Activated T-helper 2 cell treated with anti-CD3 and anti-CD28 coated beads, Interferon-gamma antibody, Interleukin-2, Interleukin-4, amounts not matched to agents 10 μg/mL and 5 μg/mL and 100 μg/mL, durations not matched to agents 14 hours and 24 hours and 36 hours (primary cell): ENCODE measurements at regions of chr6 and their contacts with region 1.

Region 1: GRCh38 chr6:53309059-53309900 is 39.5 kb downstream of the ELOVL5 start:
- DNase-seq: no peak
- H3K4me3 Mint-ChIP-seq: no peak overlapping the region
- H3K27ac Mint-ChIP-seq: no peak overlapping the region
- H3K4me1 Mint-ChIP-seq: peaks cover 80% of the 10 kb centered on the region
- H3K27me3 Mint-ChIP-seq: no peaks in the 10 kb centered on the region

Region 2: GRCh38 chr6:52976591-52977035 is 332.7 kb before region 1 on chr6:
- intact Hi-C with region 1: loop called (anchors 5 kb)
- DNase-seq: no peak
- H3K4me3 Mint-ChIP-seq: peak overlapping the region; percentile 21
- H3K27ac Mint-ChIP-seq: peak overlapping the region; percentile 91
- H3K4me1 Mint-ChIP-seq: peaks cover 51% of the 10 kb centered on the region
- H3K27me3 Mint-ChIP-seq: no peaks in the 10 kb centered on the region

Region 3: GRCh38 chr6:53171605-53172446 is 137.5 kb before region 1 on chr6:
- intact Hi-C with region 1: loop called (anchors 5 kb)
- DNase-seq: peak; percentile 78
- H3K4me3 Mint-ChIP-seq: no peak overlapping the region
- H3K27ac Mint-ChIP-seq: no peak overlapping the region
- H3K4me1 Mint-ChIP-seq: no peaks in the 10 kb centered on the region
- H3K27me3 Mint-ChIP-seq: no peaks in the 10 kb centered on the region

Region 4: DNA sequence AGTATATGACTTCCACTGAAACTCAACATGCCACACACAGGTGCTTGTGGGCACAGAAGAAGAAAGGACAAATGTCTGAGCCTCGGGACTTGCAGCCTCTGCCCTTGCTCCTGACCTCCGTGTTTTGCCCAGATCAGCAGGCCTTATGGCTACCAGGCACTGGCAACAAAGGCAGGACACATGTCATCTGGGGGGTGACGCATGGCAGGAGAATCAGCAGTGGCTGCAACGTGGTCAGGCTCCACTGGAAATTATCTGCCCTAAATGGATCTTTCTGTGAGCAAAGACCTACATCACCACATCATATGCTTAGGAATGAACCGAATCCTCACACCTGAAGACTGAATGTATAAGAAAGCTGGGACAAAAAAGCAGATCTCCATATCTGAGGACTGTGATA is 39.5 kb before region 1 on chr6:
- intact Hi-C with region 1: loop called (anchors 2 kb)
- DNase-seq: no peak
- H3K4me3 Mint-ChIP-seq: no peak overlapping the region
- H3K27ac Mint-ChIP-seq: no peak overlapping the region
- H3K4me1 Mint-ChIP-seq: peaks cover 18% of the 10 kb centered on the region
- H3K27me3 Mint-ChIP-seq: no peaks in the 10 kb centered on the region

Region 5: GRCh38 chr6:53335208-53335994 is 26.1 kb after region 1 on chr6:
- intact Hi-C with region 1: loop called (anchors 1 kb)
- DNase-seq: peak; percentile 61
- H3K4me3 Mint-ChIP-seq: peak overlapping the region; percentile 76
- H3K27ac Mint-ChIP-seq: peak overlapping the region; percentile 96
- H3K4me1 Mint-ChIP-seq: peaks cover 67% of the 10 kb centered on the region
- H3K27me3 Mint-ChIP-seq: no peaks in the 10 kb centered on the region

Region 6: GRCh38 chr6:53348371-53349208 is 39.3 kb after region 1 on chr6 and contains the start of gene ELOVL5:
- intact Hi-C with region 1: loop called (anchors 1 kb)
- DNase-seq: peak; percentile 94
- H3K4me3 Mint-ChIP-seq: peak within 1 kb of the TSS; percentile 93
- H3K27ac Mint-ChIP-seq: peak within 1 kb of the TSS; percentile 93
- H3K4me1 Mint-ChIP-seq: peaks cover 39% of the 10 kb centered on the region
- H3K27me3 Mint-ChIP-seq: peaks cover 16% of the 10 kb centered on the region
- total RNA-seq, gene ELOVL5: 122 and 133 TPM in 2 replicates

Region 7: DNA sequence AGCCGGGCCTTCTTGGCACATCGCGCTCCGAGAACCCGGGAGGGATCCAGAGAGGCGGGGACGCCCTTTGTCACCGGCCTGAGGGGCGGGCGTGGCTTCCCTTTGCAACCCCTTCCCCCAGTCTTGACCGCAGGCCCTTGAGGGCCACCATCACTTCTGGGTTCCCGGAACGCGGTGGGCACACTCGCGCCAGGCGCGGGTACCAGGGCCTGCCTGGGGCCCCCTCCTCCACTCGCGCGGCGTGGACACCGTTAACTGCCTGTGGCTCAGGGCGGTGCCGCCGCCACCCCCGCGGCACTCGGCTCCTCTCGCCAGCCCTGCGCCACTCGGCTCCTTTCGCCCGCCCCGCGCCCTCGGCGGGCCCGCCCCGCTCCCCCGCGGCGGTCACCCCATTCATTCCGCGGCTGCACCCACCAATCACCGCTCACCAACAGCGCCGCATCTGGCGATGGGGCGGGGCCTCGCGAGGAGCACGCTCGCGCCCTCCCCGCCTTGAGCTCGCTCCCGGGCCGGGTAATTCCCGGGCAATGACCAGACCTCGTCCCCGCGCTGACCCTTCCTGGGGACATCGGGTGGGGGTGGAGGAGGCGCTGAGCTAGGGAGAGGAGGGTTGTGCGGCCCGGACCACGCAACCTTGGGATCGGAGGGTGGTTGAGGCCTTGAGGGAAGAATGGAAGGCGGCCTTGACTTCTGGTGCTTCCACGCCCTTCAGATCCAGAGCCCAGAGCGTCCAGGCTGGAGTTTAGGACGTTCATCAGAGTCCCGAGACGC is 50.0 kb after region 1 on chr6:
- intact Hi-C with region 1: loop called (anchors 2 kb)
- DNase-seq: peak; percentile 92
- H3K4me3 Mint-ChIP-seq: peak overlapping the region; percentile 92
- H3K27ac Mint-ChIP-seq: peak overlapping the region; percentile 99
- H3K4me1 Mint-ChIP-seq: peaks cover 36% of the 10 kb centered on the region
- H3K27me3 Mint-ChIP-seq: peaks cover 5% of the 10 kb centered on the region